ENCODE measurements at regions of chr21 and their contacts with region 1.

Region 1: DNA sequence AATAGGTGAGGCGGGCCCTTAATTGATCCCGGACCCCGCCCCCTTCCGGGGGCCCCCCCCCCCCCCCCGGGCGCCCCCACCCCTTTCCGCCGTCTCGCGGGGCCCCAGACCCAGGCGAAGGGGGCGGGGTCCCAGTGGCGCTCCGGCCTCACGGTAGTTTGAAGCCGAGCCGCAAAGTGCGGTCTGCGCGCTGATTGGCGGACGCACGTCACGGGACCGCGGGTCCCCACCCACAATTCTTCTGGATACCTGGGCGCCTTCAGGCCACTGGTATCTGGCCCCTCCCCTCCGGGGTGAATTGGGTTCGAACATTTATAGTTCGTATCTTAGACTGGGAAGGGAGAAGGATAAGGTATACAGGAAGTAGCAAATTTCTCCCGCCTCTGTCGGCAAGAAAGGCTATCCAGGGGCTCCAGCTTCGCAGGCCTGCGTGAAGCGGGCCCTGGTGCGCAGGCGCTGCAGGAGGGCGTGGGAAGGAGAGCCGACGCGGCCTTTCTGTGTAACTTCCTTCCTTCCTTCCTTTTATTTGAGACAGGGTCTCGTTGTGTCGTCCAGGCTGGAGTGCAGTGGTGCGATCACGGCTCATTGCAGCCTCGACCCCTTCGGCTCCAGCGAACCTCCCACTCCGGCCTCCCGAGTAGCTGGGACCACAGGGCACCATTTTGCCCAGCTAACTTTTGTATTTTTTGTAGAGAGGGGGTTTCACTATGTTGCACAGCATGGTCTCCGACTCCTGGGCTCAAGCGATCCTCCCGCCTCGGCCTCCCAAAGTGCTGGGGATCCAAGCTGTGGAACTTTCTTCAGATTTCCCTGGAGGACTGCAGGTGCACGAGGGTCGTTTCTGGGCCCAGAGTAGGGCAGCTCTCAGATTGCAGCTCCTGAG is 564 bp upstream of the HMGN1 start:
- DNase-seq: peak; percentile 96 to 99 (median 98)
- H3K4me3 ChIP-seq: peak overlapping the region; percentile 60 to 89 (median 78)
- H3K27ac ChIP-seq: peak overlapping the region; percentile 79 to 92
- H3K4me1 ChIP-seq: peaks cover 16 to 42% (median 21%) of the 10 kb centered on the region in 4 experiments
- H3K27me3 ChIP-seq: no peaks in the 10 kb centered on the region

Region 2: DNA sequence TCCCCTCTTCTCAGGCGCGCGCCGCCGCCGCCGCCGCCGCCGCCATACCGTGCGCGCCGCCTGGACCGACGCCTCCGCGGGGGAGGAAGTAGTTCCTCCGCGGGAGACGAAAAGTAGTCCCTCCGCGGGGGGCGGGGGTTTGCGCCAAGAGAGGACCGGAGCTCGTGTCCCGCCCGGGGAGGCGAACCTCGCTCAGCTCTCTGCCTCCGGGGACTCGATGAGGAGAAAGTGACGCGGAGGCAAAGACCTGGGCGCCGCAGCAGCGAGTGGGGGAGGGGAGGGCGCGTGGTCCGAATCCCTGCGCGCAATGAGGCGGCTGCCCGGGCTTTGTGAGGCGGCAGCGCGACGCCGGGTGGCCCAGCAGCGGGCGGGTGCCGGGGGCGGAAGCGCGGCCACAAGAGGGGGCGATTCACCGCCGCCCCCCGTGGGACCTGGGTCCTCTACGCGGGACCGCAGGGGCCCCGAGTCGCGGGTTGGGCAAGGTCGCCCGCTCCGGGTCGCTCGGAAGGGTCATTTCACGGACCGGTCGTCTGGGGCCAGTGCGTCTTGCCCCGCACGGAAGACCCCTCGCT is 35.8 kb before region 1 on chr21 and contains the start of gene BRWD1:
- CTCF ChIA-PET with region 1: interaction called, 12 read pairs
- POLR2A ChIA-PET with region 1: interaction called, 13 read pairs
- DNase-seq: peak; percentile 91 to 96 (median 93)
- H3K4me3 ChIP-seq: peak within 1 kb of the TSS; percentile 64 to 94 (median 84)
- H3K27ac ChIP-seq: peak within 1 kb of the TSS; percentile 66 to 87
- H3K4me1 ChIP-seq: peaks cover 7 to 18% (median 15%) of the 10 kb centered on the region in 4 experiments
- H3K27me3 ChIP-seq: no peaks in the 10 kb centered on the region

Region 3: DNA sequence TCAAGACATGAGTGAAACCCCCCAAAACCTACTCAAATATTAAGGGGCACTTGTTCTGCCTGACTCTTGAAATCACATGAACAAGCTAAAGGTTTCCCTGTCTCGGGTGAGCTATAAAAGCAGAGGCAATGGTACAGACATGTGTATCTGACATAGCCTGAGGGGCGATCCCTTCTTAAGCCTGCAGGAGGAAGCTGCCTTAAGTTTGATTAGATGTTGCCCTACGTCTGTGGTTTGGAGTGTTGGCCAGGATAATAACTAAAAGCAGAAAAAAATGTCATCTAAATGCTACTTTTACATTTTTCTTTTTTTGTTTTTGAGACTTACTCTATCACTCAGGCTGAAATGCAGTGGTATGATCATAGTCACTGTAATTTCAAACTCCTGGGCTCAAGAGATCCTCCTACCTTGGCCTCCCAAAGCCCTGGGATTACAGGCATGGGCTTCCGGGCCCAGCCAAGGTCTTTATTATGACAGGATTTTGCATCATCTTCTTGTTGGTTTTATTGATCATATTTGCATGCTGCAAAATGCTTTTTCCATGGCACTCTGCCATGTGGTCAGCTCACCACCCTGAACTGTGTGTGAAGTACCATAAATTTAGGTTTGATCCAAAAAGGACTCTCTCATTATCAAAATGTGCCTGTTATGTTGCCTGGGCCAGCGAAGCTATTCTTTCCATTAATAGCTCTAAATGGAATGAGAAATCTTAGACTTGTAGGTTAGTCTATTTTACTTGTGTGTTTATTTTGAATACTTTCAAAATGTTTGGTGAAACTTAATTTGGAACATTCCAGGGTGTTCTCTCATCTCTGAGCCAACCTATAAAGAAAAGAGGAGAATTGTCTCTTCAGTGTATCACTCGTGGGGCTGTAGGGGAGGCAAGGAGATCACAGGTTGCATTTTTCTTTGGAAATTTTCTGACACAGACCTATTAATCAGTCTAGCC is 14.4 kb after region 1 on chr21:
- CTCF ChIA-PET with region 1: interaction called, 10 read pairs
- POLR2A ChIA-PET with region 1: interaction called, 4 read pairs
- DNase-seq: peak; percentile 80 to 92 (median 85)
- H3K4me3 ChIP-seq: peak overlapping the region in 1 of 7 experiments; percentile 23
- H3K27ac ChIP-seq: peak overlapping the region in 1 of 2 experiments; percentile 52
- H3K4me1 ChIP-seq: peaks cover 10 to 26% (median 19%) of the 10 kb centered on the region in 4 experiments
- H3K27me3 ChIP-seq: no peaks in the 10 kb centered on the region

Region 4: GRCh38 chr21:39373644-39374043 is 24.2 kb after region 1 on chr21:
- CTCF ChIA-PET with region 1: interaction called, 10 read pairs
- POLR2A ChIA-PET with region 1: interaction called, 5 read pairs
- DNase-seq: peak; percentile 50 to 82 (median 79)
- H3K4me3 ChIP-seq: no peak overlapping the region
- H3K27ac ChIP-seq: no peak overlapping the region
- H3K4me1 ChIP-seq: peaks cover 3 to 32% (median 13%) of the 10 kb centered on the region in 4 experiments
- H3K27me3 ChIP-seq: no peaks in the 10 kb centered on the region

Region 5: DNA sequence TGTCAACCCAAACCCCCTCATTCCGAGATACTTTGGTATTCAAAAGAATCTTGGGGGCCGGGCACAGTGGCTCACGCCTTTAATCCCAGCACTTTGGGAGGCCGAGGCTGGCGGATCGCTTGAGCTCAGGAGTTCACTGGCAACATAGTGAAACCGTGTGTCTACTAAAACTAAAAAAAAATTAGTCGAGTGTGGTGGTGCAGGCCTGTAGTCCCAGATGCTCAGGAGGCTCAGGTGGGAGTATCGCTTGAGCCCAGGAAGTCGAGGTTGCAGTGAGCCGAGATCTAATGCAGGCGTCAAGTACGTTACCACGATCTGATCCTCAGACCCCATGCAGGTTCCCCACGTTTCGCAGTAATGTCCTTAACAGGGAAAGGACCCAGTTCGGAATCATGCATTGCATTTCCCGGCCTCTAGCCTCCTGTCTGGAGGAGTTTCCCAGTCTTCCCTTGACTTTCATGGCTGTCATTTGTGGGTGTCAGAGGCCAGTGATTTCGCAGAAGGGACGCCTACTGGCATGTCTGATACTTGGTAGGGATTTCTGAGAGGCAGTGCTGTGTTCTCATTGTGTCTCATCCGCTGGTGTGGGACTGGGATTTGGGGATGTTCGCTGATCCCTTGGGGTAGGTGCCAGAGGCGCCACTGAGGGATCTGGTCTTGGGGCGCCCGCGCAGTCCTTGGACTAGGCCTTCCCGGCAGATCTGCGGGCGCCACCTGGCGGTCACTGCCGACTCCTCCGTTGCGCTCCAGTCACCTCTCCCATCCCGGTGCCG is 38.8 kb after region 1 on chr21:
- CTCF ChIA-PET with region 1: interaction called, 14 read pairs
- POLR2A ChIA-PET with region 1: interaction called, 9 read pairs
- DNase-seq: peak; percentile 82 to 85 (median 82)
- H3K4me3 ChIP-seq: peak overlapping the region in 6 of 7 experiments; percentile 49 to 82 (median 67)
- H3K27ac ChIP-seq: peak overlapping the region in 1 of 2 experiments; percentile 79
- H3K4me1 ChIP-seq: peaks cover 3 to 37% (median 30%) of the 10 kb centered on the region in 4 experiments
- H3K27me3 ChIP-seq: no peaks in the 10 kb centered on the region

Region 6: DNA sequence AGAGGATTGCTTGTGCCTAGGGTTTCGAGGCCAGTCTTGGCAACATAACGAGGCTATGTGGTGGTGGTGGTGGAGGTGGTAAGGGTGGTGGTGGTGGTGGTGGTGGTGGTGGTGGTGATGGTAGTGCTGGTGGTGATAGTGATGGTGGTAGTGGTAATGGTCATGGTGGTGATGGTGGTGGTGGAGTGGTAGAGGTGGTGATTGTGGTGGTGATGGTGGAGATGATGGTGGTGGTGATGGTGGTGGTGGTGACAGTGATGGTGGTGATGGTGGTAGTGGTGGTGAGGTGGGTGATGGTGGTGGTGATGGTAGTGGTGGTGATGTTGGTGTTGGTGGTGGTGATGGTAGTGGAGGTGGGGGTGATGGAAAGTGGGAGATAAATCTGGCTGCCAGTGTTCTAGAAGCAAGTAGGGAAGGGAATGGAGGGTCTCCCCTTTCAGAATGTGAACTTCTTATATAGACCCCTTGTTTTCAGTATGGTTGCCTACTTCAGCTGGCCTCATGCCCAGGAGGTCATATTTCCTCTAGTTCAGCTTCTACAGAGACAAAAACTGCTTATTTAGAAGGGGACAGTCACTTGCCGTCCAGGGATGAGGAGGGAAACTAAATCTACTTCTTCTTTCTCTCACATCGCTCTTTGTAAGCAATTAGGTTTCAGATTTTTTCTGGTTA is 129.8 kb after region 1 on chr21:
- CTCF ChIA-PET with region 1: no interaction called
- POLR2A ChIA-PET with region 1: no interaction called
- DNase-seq: no peak
- H3K4me3 ChIP-seq: no peak overlapping the region
- H3K27ac ChIP-seq: no peak overlapping the region
- H3K4me1 ChIP-seq: no peaks in the 10 kb centered on the region
- H3K27me3 ChIP-seq: no peaks in the 10 kb centered on the region